ENCODE measurements at regions of chr5 and their contacts with region 1.

Region 1: GRCh38 chr5:111757355-111758283 is 625 bp upstream of the NREP start:
- DNase-seq: peak; percentile 90
- ATAC-seq: peak; percentile 71
- H3K4me3 ChIP-seq: peak overlapping the region; percentile 91
- H3K27ac ChIP-seq: peak overlapping the region; percentile 76
- H3K4me1 ChIP-seq: peaks cover 34% of the 10 kb centered on the region
- H3K27me3 ChIP-seq: no peaks in the 10 kb centered on the region
- CTCF ChIP-seq: peak; percentile 41

Region 2: GRCh38 chr5:111512375-111513130 is 245.1 kb before region 1 on chr5 and contains the start of gene STARD4:
- CTCF ChIA-PET with region 1: no interaction called
- POLR2A ChIA-PET with region 1: no interaction called
- intact Hi-C with region 1: loop called (anchors 5 kb)
- DNase-seq: peak; percentile 95
- ATAC-seq: peak; percentile 96
- H3K4me3 ChIP-seq: peak within 1 kb of the TSS; percentile 86
- H3K27ac ChIP-seq: peak within 1 kb of the TSS; percentile 93
- H3K4me1 ChIP-seq: peaks cover 14% of the 10 kb centered on the region
- H3K27me3 ChIP-seq: no peaks in the 10 kb centered on the region
- CTCF ChIP-seq: no peak
- total RNA-seq, gene STARD4: 13.4 and 17.1 TPM in 2 replicates

Region 3: DNA sequence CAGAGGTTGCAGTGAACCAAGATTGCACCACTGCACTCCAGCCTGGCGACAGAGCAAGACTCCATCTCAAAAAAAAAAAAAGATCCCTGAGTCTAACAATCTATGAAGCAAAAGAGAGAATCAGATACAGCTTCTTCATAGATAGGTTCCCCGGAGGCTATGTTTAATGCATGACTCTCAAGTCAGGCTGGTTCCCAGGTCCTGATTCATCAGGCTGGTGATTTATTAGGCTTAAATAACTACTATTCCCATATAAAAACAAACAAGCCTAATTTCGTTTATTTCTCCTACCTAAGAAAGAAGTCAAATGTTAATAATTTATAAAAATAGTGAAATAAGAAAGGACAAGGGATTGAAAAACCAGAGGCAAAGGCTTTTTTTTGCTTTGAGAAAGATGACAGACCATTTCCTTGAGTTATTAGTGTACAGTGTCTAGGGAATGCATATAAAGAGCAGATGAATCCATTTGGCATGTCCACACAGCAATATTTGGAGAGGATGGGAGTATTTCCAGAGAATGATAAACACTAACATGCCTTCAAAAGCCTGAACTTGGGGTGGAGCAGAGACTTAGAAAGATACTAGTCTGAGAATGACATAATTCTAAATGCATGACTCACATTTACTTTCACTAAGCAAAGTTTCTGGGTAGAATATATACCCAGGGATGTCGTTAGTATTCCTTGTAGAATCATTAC is 115.9 kb before region 1 on chr5:
- CTCF ChIA-PET with region 1: no interaction called
- POLR2A ChIA-PET with region 1: interaction called, 12 read pairs
- intact Hi-C with region 1: no loop called
- DNase-seq: peak; percentile 83
- ATAC-seq: peak; percentile 90
- H3K4me3 ChIP-seq: peak overlapping the region; percentile 13; the same call in 1 of the 2 replicates
- H3K27ac ChIP-seq: peak overlapping the region; percentile 93
- H3K4me1 ChIP-seq: peaks cover 18% of the 10 kb centered on the region
- H3K27me3 ChIP-seq: no peaks in the 10 kb centered on the region
- CTCF ChIP-seq: no peak

Region 4: DNA sequence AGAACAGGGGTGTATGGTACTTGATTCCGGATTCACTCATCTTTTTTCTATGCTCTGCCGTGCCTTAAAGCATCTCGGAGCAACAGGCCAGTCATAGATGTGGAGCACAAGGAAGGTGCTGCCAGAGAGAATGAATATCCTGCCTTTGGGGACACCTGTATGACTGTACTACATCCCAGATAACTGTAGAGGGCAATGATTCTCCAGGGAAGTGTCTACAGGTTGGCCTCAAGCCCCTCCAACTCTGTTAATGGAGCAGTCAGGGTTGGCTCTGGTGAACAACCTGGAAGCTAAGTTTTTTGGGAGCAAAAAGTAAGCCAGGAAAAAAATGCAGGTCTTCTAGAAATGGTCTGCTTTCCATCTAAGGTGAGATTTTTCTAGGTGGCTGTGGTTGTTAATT is 71.6 kb before region 1 on chr5:
- CTCF ChIA-PET with region 1: no interaction called
- POLR2A ChIA-PET with region 1: no interaction called
- intact Hi-C with region 1: loop called (anchors 1 kb)
- DNase-seq: peak; percentile 65
- ATAC-seq: peak; percentile 69
- H3K4me3 ChIP-seq: no peak overlapping the region
- H3K27ac ChIP-seq: no peak overlapping the region
- H3K4me1 ChIP-seq: peaks cover 17% of the 10 kb centered on the region
- H3K27me3 ChIP-seq: no peaks in the 10 kb centered on the region
- CTCF ChIP-seq: peak; percentile 77

Region 5: GRCh38 chr5:111830333-111830732 is 72.7 kb after region 1 on chr5:
- CTCF ChIA-PET with region 1: interaction called, 4 read pairs
- POLR2A ChIA-PET with region 1: no interaction called
- intact Hi-C with region 1: loop called (anchors 1 kb)
- DNase-seq: peak; percentile 98
- ATAC-seq: peak; percentile 89
- H3K4me3 ChIP-seq: no peak overlapping the region
- H3K27ac ChIP-seq: peak overlapping the region; percentile 33
- H3K4me1 ChIP-seq: peaks cover 15% of the 10 kb centered on the region
- H3K27me3 ChIP-seq: no peaks in the 10 kb centered on the region
- CTCF ChIP-seq: no peak

Region 6: GRCh38 chr5:112146323-112147226 is 389.0 kb after region 1 on chr5:
- CTCF ChIA-PET with region 1: interaction called, 4 read pairs
- POLR2A ChIA-PET with region 1: no interaction called
- intact Hi-C with region 1: loop called (anchors 1 kb)
- DNase-seq: peak; percentile 76
- ATAC-seq: peak; percentile 98
- H3K4me3 ChIP-seq: no peak overlapping the region
- H3K27ac ChIP-seq: no peak overlapping the region
- H3K4me1 ChIP-seq: peaks cover 4% of the 10 kb centered on the region; the same call in 1 of the 2 replicates
- H3K27me3 ChIP-seq: no peaks in the 10 kb centered on the region
- CTCF ChIP-seq: peak; percentile 91

Measured in PC-3 (cell line).